ENCODE measurements at regions of chr12 and their contacts with region 1.

Region 1: GRCh38 chr12:115306401-115306800 is 622.4 kb upstream of the TBX3 start:
- DNase-seq: no peak
- H3K4me3 ChIP-seq: no peak overlapping the region
- H3K27ac ChIP-seq: no peak overlapping the region
- H3K4me1 ChIP-seq: no peaks in the 10 kb centered on the region
- H3K27me3 ChIP-seq: no peaks in the 10 kb centered on the region
- CTCF ChIP-seq: no peak

Region 2: GRCh38 chr12:115204957-115205754 is 101.2 kb before region 1 on chr12:
- CTCF ChIA-PET with region 1: no interaction called
- dilution Hi-C with region 1: loop called (anchors 5 kb)
- in situ Hi-C with region 1: no loop called
- intact Hi-C with region 1: no loop called
- DNase-seq: peak; percentile 67
- H3K4me3 ChIP-seq: no peak overlapping the region
- H3K27ac ChIP-seq: no peak overlapping the region
- H3K4me1 ChIP-seq: peaks cover 6% of the 10 kb centered on the region
- H3K27me3 ChIP-seq: no peaks in the 10 kb centered on the region
- CTCF ChIP-seq: no peak

Region 3: GRCh38 chr12:115273456-115273855 is 32.9 kb before region 1 on chr12:
- CTCF ChIA-PET with region 1: no interaction called
- dilution Hi-C with region 1: no loop called
- in situ Hi-C with region 1: no loop called
- intact Hi-C with region 1: no loop called
- DNase-seq: peak; percentile 66
- H3K4me3 ChIP-seq: no peak overlapping the region
- H3K27ac ChIP-seq: no peak overlapping the region
- H3K4me1 ChIP-seq: peaks cover 6% of the 10 kb centered on the region
- H3K27me3 ChIP-seq: no peaks in the 10 kb centered on the region
- CTCF ChIP-seq: no peak

Measured in mammary epithelial cell (primary cell).